Activated naive CD4-positive, alpha-beta T cell treated with anti-CD3 and anti-CD28 coated beads for 36 hours (primary cell): ENCODE measurements at regions of chrX and their contacts with region 1.

Region 1: GRCh38 chrX:130079824-130080406 is 30.4 kb downstream of the ELF4 start:
- DNase-seq: peak; percentile 74
- H3K4me3 Mint-ChIP-seq: no peak overlapping the region
- H3K27ac Mint-ChIP-seq: peak overlapping the region; percentile 4
- H3K4me1 Mint-ChIP-seq: peaks cover 41% of the 10 kb centered on the region
- H3K27me3 Mint-ChIP-seq: no peaks in the 10 kb centered on the region

Region 2: DNA sequence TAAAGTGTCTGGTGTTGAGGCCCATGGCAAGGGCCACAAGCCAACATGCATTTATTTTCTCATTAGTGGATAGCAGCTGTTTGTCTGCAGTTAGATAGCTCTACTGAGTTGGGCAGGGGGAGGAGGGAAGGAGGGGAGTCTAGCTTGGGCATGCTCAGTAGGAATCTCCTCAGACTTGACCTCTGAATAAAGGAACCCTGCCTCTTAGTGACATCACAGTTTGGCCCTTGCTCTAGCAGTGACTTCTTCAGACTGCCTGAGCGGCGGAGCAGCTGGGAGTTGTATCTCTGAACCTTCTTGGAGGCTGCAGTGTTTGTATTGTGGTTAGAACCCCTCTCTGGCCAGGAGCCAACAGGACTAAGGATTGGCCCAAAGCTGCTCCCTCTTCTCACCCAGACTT is 40.1 kb before region 1 on chrX:
- CTCF ChIA-PET with region 1: no interaction called
- intact Hi-C with region 1: no loop called
- DNase-seq: no peak
- H3K4me3 Mint-ChIP-seq: no peak overlapping the region
- H3K27ac Mint-ChIP-seq: no peak overlapping the region
- H3K4me1 Mint-ChIP-seq: no peaks in the 10 kb centered on the region
- H3K27me3 Mint-ChIP-seq: no peaks in the 10 kb centered on the region

Region 3: DNA sequence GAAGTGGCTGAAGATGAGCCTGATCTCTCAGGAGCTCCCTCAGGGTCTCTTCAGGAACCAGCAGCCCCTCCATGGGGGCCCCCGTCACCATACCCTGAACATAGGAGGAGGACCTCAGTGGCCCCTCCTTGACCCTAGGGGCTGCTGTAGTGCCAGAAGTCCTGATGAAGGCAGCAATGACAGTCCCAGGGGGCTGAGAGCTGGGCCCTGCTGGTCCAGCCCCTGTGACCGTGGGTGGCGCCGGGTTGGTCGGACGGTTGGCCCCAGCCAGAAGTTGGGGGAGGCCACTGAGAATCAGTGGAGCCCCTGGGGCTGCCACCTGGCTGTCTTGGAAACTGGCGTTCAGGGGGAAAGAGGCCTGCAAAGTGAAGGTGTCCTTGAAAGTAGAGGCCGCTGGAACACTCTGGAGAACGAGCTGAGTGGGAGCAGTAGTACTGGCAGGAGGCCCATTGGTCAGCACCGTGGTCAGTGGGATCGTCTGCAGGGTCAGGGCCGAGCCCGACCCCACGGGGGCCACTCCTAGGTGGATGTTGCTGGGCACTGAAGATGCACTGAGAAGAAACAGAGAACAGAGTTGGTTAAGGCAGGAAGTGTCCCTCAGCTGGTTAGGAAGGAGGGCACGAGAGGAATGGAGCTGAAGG is 12.8 kb before region 1 on chrX:
- CTCF ChIA-PET with region 1: interaction called, 14 read pairs
- intact Hi-C with region 1: no loop called
- DNase-seq: no peak
- H3K4me3 Mint-ChIP-seq: no peak overlapping the region
- H3K27ac Mint-ChIP-seq: no peak overlapping the region
- H3K4me1 Mint-ChIP-seq: no peaks in the 10 kb centered on the region
- H3K27me3 Mint-ChIP-seq: no peaks in the 10 kb centered on the region

Region 4: DNA sequence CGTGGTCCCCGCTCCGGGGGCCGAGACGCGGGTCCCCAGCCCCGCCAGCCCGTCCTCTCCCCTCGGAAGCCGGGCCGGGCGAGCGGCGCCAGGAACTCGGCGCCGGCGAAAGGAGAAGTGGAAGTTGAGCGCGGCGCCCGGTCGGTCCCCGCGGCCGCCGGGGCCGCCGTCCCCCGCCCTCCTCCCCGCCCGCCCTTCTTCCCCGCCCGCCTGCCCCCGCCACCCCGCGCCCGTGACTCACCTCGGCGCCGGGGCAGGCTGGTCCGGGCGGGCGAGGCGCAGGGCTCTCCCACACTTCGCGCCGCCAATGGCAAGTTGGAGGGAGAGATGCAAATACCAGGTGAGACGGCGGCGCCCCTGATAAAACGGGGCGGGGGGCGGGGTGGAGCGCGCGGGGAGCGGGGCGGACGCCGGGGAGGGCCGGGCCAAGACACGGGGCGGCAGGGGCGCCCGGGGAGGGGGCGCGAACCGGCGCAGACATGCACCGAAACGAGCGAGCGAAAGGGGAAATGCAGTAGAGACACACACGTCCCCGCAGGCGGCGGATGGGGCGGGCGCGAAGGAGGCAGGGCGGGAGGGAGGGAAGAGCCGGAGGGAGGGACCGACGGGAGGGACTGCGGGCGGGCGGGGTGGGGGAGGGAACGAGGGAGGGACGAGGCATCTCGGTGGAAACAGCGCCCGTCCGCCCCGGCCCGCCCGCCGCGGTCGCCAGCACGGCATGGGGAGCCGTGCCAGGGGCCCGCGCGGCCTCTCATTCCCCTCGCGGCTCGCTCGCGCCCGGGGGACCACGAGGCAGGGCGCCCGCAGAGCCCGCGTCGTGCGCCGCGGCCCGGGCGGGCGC is 30.7 kb after region 1 on chrX and contains the start of gene ELF4:
- CTCF ChIA-PET with region 1: interaction called, 20 read pairs
- intact Hi-C with region 1: loop called (anchors 1 kb)
- DNase-seq: peak; percentile 66
- H3K4me3 Mint-ChIP-seq: peak within 1 kb of the TSS; percentile 87
- H3K27ac Mint-ChIP-seq: peak within 1 kb of the TSS; percentile 87
- H3K4me1 Mint-ChIP-seq: peaks cover 36% of the 10 kb centered on the region
- H3K27me3 Mint-ChIP-seq: no peaks in the 10 kb centered on the region
- total RNA-seq, gene ELF4: 15.8 to 16.5 TPM

Region 5: GRCh38 chrX:130173190-130173895 is 93.4 kb after region 1 on chrX:
- CTCF ChIA-PET with region 1: interaction called, 3 read pairs
- intact Hi-C with region 1: loop called (anchors 1 kb)
- DNase-seq: peak; percentile 68
- H3K4me3 Mint-ChIP-seq: peak overlapping the region; percentile 87
- H3K27ac Mint-ChIP-seq: peak overlapping the region; percentile 94
- H3K4me1 Mint-ChIP-seq: peaks cover 45% of the 10 kb centered on the region
- H3K27me3 Mint-ChIP-seq: no peaks in the 10 kb centered on the region

Region 6: DNA sequence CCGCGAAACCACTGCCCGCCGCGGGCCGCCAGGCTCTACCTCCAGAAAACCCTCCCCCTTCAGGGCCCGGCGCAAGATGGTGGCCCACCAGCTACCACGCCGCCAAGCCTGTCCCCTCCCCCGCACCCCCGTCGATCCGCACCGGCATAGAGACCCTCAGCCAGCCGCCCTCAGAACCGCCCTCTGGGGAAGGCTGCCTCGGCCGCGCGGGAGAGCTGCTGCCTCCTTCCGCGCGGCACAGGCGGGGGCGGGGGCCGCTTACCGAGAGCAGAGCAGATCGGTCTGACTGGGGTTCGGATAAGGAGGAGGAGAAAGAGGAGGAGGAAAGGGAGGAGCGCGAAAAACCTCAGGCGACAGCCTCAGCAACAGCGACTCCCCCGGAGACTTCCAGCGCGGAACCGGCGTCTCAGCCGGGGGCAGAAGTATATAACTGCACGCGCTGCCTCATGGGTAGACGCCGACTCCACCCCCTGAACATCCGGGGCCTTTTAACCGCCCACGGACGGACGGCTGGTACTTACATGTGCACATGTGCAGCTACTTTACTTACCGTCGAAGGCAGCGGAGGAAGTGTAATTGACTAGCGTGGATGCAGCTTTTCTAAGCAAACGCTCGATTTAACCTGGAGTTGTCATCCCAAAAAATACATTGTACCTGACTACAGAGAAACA is 188.7 kb after region 1 on chrX and contains the start of gene ZNF280C:
- CTCF ChIA-PET with region 1: no interaction called
- intact Hi-C with region 1: loop called (anchors 1 kb)
- DNase-seq: peak; percentile 95
- H3K4me3 Mint-ChIP-seq: peak within 1 kb of the TSS; percentile 85
- H3K27ac Mint-ChIP-seq: peak within 1 kb of the TSS; percentile 79
- H3K4me1 Mint-ChIP-seq: peaks cover 18% of the 10 kb centered on the region
- H3K27me3 Mint-ChIP-seq: no peaks in the 10 kb centered on the region
- total RNA-seq, gene ZNF280C: 3.9 to 4.0 TPM

Region 7: GRCh38 chrX:132022967-132023895 is 1943.3 kb after region 1 on chrX and contains the start of gene STK26:
- CTCF ChIA-PET with region 1: no interaction called
- intact Hi-C with region 1: loop called (anchors 10 kb)
- DNase-seq: peak; percentile 80
- H3K4me3 Mint-ChIP-seq: peak within 1 kb of the TSS; percentile 91
- H3K27ac Mint-ChIP-seq: peak within 1 kb of the TSS; percentile 91
- H3K4me1 Mint-ChIP-seq: peaks cover 31% of the 10 kb centered on the region
- H3K27me3 Mint-ChIP-seq: no peaks in the 10 kb centered on the region
- total RNA-seq, gene STK26: 54.0 to 55.6 TPM